Caco-2 (cell line): ENCODE measurements at regions of chr6 and their contacts with region 1.

Region 1: GRCh38 chr6:157597446-157598312 is 216.7 kb downstream of the ZDHHC14 start:
- DNase-seq: peak; percentile 62 to 73
- H3K4me3 ChIP-seq: no peak overlapping the region
- H3K4me3 Mint-ChIP-seq: peak overlapping the region; percentile 8
- H3K27ac Mint-ChIP-seq: peak overlapping the region; percentile 76
- H3K4me1 ChIP-seq: peaks cover 12% of the 10 kb centered on the region
- H3K4me1 Mint-ChIP-seq: peaks cover 23% of the 10 kb centered on the region
- H3K27me3 ChIP-seq: no peaks in the 10 kb centered on the region
- H3K27me3 Mint-ChIP-seq: no peaks in the 10 kb centered on the region
- CTCF ChIP-seq: peak; percentile 67 to 68

Region 2: DNA sequence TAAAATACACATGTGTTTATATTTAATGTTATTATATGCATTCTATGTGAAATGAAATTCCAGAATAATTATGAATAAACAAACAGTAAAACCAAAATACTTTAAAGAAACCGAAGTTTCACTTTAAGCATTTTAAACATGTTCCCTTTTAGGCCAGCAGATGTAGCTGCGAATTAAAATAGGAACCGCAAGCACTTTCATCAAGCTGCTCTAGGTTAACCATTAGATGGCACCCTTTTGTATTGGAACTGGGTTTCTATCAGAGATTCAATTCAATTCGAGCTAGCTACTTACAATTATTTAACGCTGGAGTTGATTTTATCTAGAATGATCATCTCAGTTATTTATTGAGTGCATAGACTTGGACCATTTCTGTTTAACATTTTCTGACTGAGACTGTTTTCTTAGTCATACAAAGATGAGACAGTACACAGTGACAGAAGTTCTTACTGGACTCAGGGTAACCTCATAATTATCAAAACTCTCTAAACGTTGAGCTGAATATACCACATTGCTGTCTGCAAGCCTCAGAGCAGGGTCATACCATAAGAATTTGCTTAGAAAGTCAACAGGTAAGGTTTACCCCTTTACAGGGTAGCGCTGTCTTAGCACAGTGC is 282.9 kb before region 1 on chr6:
- CTCF ChIA-PET with region 1: interaction called, 10 read pairs
- POLR2A ChIA-PET with region 1: no interaction called
- intact Hi-C with region 1: loop called (anchors 1 kb)
- DNase-seq: peak in 1 of 2 experiments; percentile 41
- H3K4me3 ChIP-seq: no peak overlapping the region
- H3K4me3 Mint-ChIP-seq: no peak overlapping the region
- H3K27ac Mint-ChIP-seq: no peak overlapping the region
- H3K4me1 ChIP-seq: no peaks in the 10 kb centered on the region
- H3K4me1 Mint-ChIP-seq: peaks cover 7% of the 10 kb centered on the region
- H3K27me3 ChIP-seq: no peaks in the 10 kb centered on the region
- H3K27me3 Mint-ChIP-seq: no peaks in the 10 kb centered on the region
- CTCF ChIP-seq: peak; percentile 58 to 85

Region 3: GRCh38 chr6:157379656-157380454 is 217.8 kb before region 1 on chr6:
- CTCF ChIA-PET with region 1: no interaction called
- POLR2A ChIA-PET with region 1: interaction called, 3 read pairs
- intact Hi-C with region 1: loop called (anchors 1 kb)
- DNase-seq: peak; percentile 88
- H3K4me3 ChIP-seq: peak overlapping the region; percentile 98
- H3K4me3 Mint-ChIP-seq: peak overlapping the region; percentile 83
- H3K27ac Mint-ChIP-seq: no peak overlapping the region
- H3K4me1 ChIP-seq: peaks cover 7% of the 10 kb centered on the region; the same call in 1 of the 2 replicates
- H3K4me1 Mint-ChIP-seq: peaks cover 31% of the 10 kb centered on the region
- H3K27me3 ChIP-seq: no peaks in the 10 kb centered on the region
- H3K27me3 Mint-ChIP-seq: no peaks in the 10 kb centered on the region
- CTCF ChIP-seq: no peak

Region 4: DNA sequence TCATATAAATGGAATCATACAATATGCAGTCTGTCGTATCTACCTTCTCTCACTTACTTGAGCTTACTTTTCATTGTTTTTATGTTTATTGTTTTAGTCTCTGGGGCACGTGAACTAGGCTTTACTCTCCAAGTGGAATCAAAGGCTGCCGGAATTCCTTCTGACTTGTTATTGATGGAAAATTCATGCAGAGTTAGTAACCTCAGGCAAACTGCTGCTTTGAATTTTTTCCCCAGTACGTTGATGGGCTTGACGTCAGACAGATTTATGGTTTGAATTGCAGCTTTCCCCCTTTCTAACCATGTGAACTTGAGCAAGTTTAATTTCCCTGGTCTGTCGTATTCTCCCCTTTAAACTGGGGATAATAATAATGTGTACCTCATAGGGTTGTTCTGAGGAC is 148.1 kb before region 1 on chr6:
- CTCF ChIA-PET with region 1: no interaction called
- POLR2A ChIA-PET with region 1: no interaction called
- intact Hi-C with region 1: loop called (anchors 1 kb)
- DNase-seq: no peak
- H3K4me3 ChIP-seq: no peak overlapping the region
- H3K4me3 Mint-ChIP-seq: peak overlapping the region; percentile 36
- H3K27ac Mint-ChIP-seq: peak overlapping the region; percentile 41
- H3K4me1 ChIP-seq: peaks cover 13% of the 10 kb centered on the region
- H3K4me1 Mint-ChIP-seq: peaks cover 11% of the 10 kb centered on the region
- H3K27me3 ChIP-seq: no peaks in the 10 kb centered on the region
- H3K27me3 Mint-ChIP-seq: no peaks in the 10 kb centered on the region
- CTCF ChIP-seq: no peak

Region 5: DNA sequence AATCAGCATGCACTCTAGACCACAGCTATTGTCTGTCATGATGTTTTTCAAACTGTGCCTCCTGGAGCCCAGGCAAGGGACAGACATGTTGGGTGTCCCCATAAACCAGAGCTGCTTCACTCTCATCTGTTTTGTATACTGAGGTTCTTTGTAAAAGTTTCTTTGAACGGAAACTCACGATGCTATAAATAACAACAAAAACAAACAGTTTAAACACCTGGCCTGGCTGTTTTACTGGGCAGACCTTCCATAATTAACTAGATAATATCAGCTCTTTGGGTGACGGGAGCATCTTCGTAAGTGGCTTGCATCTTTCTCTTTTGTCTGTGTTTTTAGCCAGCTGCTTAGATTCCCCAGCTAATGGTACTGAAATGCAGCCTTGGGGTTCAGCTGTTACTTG is 26.4 kb before region 1 on chr6:
- CTCF ChIA-PET with region 1: interaction called, 3 read pairs
- POLR2A ChIA-PET with region 1: no interaction called
- intact Hi-C with region 1: loop called (anchors 1 kb)
- DNase-seq: no peak
- H3K4me3 ChIP-seq: no peak overlapping the region
- H3K4me3 Mint-ChIP-seq: no peak overlapping the region
- H3K27ac Mint-ChIP-seq: peak overlapping the region; percentile 32
- H3K4me1 ChIP-seq: 0 out of 2 replicates have a peak, but pooled peaks cover 6% of the 10 kb centered on the region
- H3K4me1 Mint-ChIP-seq: peaks cover 5% of the 10 kb centered on the region
- H3K27me3 ChIP-seq: no peaks in the 10 kb centered on the region
- H3K27me3 Mint-ChIP-seq: no peaks in the 10 kb centered on the region
- CTCF ChIP-seq: no peak